ENCODE measurements at regions of chr6 and their contacts with region 1.

Region 1: GRCh38 chr6:24646782-24647181 is 791 bp upstream of the KIAA0319 start:
- DNase-seq: no peak
- H3K4me3 Mint-ChIP-seq: peak overlapping the region; percentile 79
- H3K27ac Mint-ChIP-seq: peak overlapping the region; percentile 38
- H3K4me1 Mint-ChIP-seq: peaks cover 16% of the 10 kb centered on the region
- H3K27me3 Mint-ChIP-seq: peaks cover 17% of the 10 kb centered on the region

Region 2: DNA sequence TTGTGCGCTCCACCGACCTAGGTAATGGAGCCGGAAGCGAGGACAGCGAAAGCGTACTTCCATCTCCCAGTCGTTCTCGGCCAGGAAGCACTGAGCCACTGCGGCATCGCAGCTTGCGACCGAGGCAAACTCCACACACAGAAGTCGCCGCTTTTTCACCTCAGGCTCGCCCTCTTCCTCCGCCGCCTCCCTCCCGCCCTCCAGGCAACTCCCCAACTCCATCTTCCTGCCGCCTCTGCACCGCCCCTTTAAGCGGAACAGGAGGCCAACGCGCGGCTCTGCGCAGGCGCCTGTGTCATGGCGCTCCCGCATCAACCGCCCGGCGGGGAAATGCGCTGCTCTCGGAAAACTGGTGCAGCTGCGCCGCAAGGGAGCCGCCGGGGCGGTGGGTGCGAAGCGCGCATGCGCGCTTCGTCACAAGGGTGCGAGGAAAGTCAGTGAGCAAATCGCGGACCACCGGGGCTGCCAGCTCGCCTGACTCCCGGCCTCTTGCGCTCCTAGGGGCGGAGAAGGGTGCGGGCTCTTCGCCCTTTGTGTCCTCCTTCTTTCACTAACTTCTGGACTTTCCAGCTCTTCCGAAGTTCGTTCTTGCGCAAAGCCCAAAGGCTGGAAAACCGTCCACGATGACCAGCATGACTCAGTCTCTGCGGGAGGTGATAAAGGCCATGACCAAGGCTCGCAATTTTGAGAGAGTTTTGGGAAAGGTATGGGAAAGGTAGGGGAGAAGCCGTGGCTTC is 20.0 kb after region 1 on chr6 and contains the starts of genes ACOT13 and TDP2:
- CTCF ChIA-PET with region 1: interaction called, 4 read pairs
- POLR2A ChIA-PET with region 1: interaction called, 4 read pairs
- intact Hi-C with region 1: loop called (anchors 1 kb)
- DNase-seq: peak; percentile 98
- H3K4me3 Mint-ChIP-seq: peak within 1 kb of the TSS; percentile 95
- H3K27ac Mint-ChIP-seq: peak within 1 kb of the TSS; percentile 93
- H3K4me1 Mint-ChIP-seq: peaks cover 53% of the 10 kb centered on the region
- H3K27me3 Mint-ChIP-seq: no peaks in the 10 kb centered on the region
- total RNA-seq, gene ACOT13: 33.7 to 35.9 TPM
- total RNA-seq, gene TDP2: 47.5 to 48.6 TPM